Mammary epithelial cell (primary cell): ENCODE measurements at regions of chr2 and their contacts with region 1.

Region 1: GRCh38 chr2:234564699-234565098 is 67.8 kb upstream of the ARL4C start:
- DNase-seq: no peak
- H3K4me3 ChIP-seq: no peak overlapping the region
- H3K27ac ChIP-seq: no peak overlapping the region
- H3K4me1 ChIP-seq: no peaks in the 10 kb centered on the region
- H3K27me3 ChIP-seq: no peaks in the 10 kb centered on the region
- CTCF ChIP-seq: peak in 1 of 2 donors; percentile 34

Region 2: GRCh38 chr2:234635286-234635685 is 70.6 kb after region 1 on chr2:
- CTCF ChIA-PET with region 1: no interaction called
- dilution Hi-C with region 1: no loop called
- in situ Hi-C with region 1: no loop called
- intact Hi-C with region 1: no loop called
- DNase-seq: no peak
- H3K4me3 ChIP-seq: no peak overlapping the region
- H3K27ac ChIP-seq: no peak overlapping the region
- H3K4me1 ChIP-seq: peaks cover 6% of the 10 kb centered on the region
- H3K27me3 ChIP-seq: no peaks in the 10 kb centered on the region
- CTCF ChIP-seq: peak in 1 of 2 donors; percentile 17

Region 3: GRCh38 chr2:234712421-234712935 is 147.8 kb after region 1 on chr2:
- CTCF ChIA-PET with region 1: no interaction called
- dilution Hi-C with region 1: no loop called
- in situ Hi-C with region 1: no loop called
- intact Hi-C with region 1: no loop called
- DNase-seq: no peak
- H3K4me3 ChIP-seq: no peak overlapping the region
- H3K27ac ChIP-seq: no peak overlapping the region
- H3K4me1 ChIP-seq: no peaks in the 10 kb centered on the region
- H3K27me3 ChIP-seq: no peaks in the 10 kb centered on the region
- CTCF ChIP-seq: no peak

Region 4: DNA sequence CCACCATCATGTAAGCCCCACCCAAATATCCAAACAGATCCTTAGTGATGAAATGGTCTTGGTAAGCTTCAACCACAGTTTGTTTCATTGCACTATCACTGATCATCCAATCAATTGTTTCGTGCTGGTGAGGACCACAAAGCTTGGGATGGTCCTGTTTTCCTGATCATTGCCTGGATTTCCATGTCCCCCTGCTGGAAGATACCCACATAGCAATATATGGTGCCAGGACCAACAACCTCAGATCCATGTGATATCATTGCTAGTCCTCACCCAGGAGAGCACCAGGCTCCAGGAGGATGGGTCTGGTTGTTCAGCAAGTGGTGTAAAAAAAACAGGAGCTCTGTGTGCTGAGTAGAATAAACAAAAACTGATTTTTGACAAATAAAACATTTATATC is 180.6 kb after region 1 on chr2:
- CTCF ChIA-PET with region 1: no interaction called
- dilution Hi-C with region 1: no loop called
- in situ Hi-C with region 1: no loop called
- intact Hi-C with region 1: loop called (anchors 10 kb)
- DNase-seq: no peak
- H3K4me3 ChIP-seq: no peak overlapping the region
- H3K27ac ChIP-seq: no peak overlapping the region
- H3K4me1 ChIP-seq: no peaks in the 10 kb centered on the region
- H3K27me3 ChIP-seq: no peaks in the 10 kb centered on the region
- CTCF ChIP-seq: peak; percentile 18 to 29